Activated CD4-positive, alpha-beta T cell treated with anti-CD3 and anti-CD28 coated beads, Interleukin-2, amount 10 ng/mL, durations not matched to agents 24 days and 14 days (primary cell): ENCODE measurements at regions of chr10 and their contacts with region 1.

Region 1: GRCh38 chr10:3095373-3096139 is 28.2 kb downstream of the PFKP start:
- DNase-seq: peak; percentile 85
- H3K4me3 Mint-ChIP-seq: peak overlapping the region; percentile 61
- H3K27ac Mint-ChIP-seq: peak overlapping the region; percentile 89
- H3K4me1 Mint-ChIP-seq: peaks cover 55% of the 10 kb centered on the region
- H3K27me3 Mint-ChIP-seq: no peaks in the 10 kb centered on the region

Region 2: GRCh38 chr10:2948127-2948854 is 147.3 kb before region 1 on chr10:
- intact Hi-C with region 1: loop called (anchors 1 kb)
- DNase-seq: peak; percentile 64
- H3K4me3 Mint-ChIP-seq: peak overlapping the region; percentile 5
- H3K27ac Mint-ChIP-seq: peak overlapping the region; percentile 77
- H3K4me1 Mint-ChIP-seq: peaks cover 13% of the 10 kb centered on the region
- H3K27me3 Mint-ChIP-seq: peaks cover 2% of the 10 kb centered on the region

Region 3: DNA sequence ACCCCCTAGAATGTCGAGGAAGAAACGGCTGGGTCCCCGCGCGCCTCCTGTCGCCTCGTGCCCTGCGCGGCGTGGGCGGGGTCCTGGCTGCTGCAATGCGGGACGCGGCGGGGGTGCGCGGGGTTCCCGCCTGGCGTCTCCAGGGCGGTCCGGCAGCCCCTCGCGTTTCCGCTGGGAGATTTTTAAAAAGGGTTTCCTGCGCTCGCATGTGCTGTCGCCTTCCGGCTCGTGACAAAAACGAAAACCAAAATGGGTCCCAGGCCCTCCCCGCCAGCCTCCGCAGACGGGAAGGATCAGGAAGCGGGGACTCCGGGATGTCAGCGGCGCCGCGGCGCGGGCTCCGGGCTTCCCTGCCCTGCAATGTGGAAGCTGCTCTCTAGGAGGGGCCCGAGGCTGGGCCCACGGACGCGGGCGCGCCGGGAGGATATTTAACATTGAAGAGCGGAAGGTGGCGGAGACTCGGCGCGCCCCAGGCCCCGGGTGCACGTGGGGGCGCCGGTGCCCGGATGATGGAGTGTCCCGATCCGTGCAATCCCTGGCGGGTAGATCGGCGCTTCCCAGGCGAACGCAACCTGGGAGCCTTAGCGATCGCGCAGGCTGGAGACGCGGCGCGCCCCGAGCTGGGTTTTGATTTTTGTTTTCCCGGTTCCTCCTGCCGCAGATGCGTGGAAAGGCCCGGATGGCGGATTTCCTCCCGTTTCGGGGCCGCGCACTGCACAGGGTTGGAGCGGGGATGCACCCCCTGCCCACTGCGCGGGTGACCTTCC is 27.2 kb before region 1 on chr10:
- intact Hi-C with region 1: loop called (anchors 1 kb)
- DNase-seq: peak; percentile 92
- H3K4me3 Mint-ChIP-seq: peak overlapping the region; percentile 93
- H3K27ac Mint-ChIP-seq: peak overlapping the region; percentile 95
- H3K4me1 Mint-ChIP-seq: peaks cover 36% of the 10 kb centered on the region
- H3K27me3 Mint-ChIP-seq: peaks cover 19% of the 10 kb centered on the region

Region 4: GRCh38 chr10:3151889-3152565 is 56.5 kb after region 1 on chr10:
- intact Hi-C with region 1: no loop called
- DNase-seq: no peak
- H3K4me3 Mint-ChIP-seq: no peak overlapping the region
- H3K27ac Mint-ChIP-seq: peak overlapping the region; percentile 51
- H3K4me1 Mint-ChIP-seq: peaks cover 5% of the 10 kb centered on the region
- H3K27me3 Mint-ChIP-seq: no peaks in the 10 kb centered on the region